Mammary epithelial cell (primary cell): ENCODE measurements at regions of chr1 and their contacts with region 1.

Region 1: GRCh38 chr1:209704584-209704983 is at the start of gene HSD11B1:
- DNase-seq: no peak
- H3K4me3 ChIP-seq: no peak within 1 kb of the TSS
- H3K27ac ChIP-seq: no peak within 1 kb of the TSS
- H3K4me1 ChIP-seq: peaks cover 11% of the 10 kb centered on the region
- H3K27me3 ChIP-seq: no peaks in the 10 kb centered on the region
- CTCF ChIP-seq: no peak
- total RNA-seq, gene HSD11B1: not detected

Region 2: GRCh38 chr1:209733409-209734192 is 29.0 kb after region 1 on chr1:
- CTCF ChIA-PET with region 1: no interaction called
- dilution Hi-C with region 1: loop called (anchors 5 kb)
- in situ Hi-C with region 1: no loop called
- intact Hi-C with region 1: no loop called
- DNase-seq: peak; percentile 75
- H3K4me3 ChIP-seq: no peak overlapping the region
- H3K27ac ChIP-seq: no peak overlapping the region
- H3K4me1 ChIP-seq: no peaks in the 10 kb centered on the region
- H3K27me3 ChIP-seq: no peaks in the 10 kb centered on the region
- CTCF ChIP-seq: no peak